ENCODE measurements at regions of chr12 and their contacts with region 1.

Region 1: GRCh38 chr12:10153271-10154144 is 18.4 kb downstream of the OLR1 start:
- DNase-seq: peak; percentile 54 to 81 (median 76)
- H3K4me3 ChIP-seq: peak overlapping the region; percentile 50 to 91 (median 69)
- H3K27ac ChIP-seq: peak overlapping the region; percentile 45 to 98 (median 91)
- H3K27me3 ChIP-seq: no peaks in the 10 kb centered on the region
- CTCF ChIP-seq: peak; percentile 60 to 96 (median 89)

Region 2: DNA sequence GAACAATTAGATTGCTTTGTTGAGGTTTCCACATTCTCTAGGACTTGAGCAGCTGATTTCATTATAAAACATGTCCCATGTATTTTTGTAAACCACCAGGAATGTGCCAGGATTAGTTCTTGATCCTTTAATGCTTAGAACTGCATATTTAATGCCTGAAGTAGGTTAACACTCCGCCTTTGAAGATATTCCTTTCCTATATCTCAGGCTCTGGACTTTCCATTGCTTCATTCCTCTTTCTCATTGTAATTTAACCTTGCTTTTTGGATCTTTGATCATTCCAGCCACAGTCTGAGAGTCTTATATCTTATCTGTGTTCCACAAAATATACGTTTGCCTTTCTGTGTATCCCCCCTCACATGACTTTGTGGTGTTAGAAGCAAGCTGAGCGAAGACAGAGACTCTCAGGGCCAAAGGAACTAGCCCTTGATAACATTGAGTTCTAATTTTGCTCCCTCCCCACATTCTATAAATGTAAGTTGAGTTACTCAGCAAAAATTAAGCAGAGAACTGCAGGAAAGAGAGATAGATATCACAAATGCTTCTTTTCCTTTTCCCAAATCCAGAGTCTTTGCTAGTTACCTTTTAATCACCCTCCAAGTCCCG is 152.2 kb before region 1 on chr12:
- intact Hi-C with region 1: no loop called
- DNase-seq: no peak
- H3K4me3 ChIP-seq: no peak overlapping the region
- H3K27ac ChIP-seq: no peak overlapping the region
- H3K27me3 ChIP-seq: peaks cover 0 to 2% (median 0%) of the 10 kb centered on the region in 45 donors
- CTCF ChIP-seq: no peak

Region 3: DNA sequence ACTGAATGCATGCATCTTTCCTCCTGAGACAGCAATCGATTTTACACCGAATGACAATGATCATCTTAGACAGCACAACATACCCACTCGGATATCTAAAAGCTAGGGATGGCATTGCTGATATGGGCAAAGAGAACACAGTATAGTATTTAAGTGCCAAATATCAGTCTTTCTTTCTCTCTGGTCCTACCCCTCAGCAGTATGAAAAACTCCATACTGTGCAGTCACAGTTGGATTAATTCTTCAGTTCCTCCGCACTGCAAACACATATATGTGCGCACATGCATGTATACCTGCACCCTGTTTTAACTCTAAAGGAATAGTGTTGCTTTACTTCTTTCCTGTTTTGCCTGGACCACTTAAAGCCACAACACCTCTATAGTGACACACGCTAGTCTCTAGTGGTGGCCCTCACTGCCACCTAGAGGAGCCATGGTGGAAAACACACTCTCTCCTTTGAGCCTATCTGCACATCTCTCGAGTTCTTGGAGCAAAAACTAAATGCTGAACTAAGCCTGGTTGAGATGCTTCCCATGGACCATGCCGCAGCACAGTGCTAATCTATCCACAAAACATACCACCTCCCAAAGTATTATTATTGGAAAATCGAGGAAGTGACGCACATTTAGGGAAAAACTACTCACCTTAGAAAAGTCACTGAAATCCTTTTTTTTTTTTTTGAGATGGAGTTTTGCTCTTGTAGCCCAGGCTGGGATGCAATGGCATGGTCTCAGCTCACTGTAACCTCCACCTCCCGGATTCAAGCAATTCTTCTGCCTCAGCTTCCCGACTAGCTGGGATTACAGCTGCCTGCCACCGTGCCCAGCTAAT is 37.3 kb after region 1 on chr12:
- intact Hi-C with region 1: loop called (anchors 1 to 2 kb)
- DNase-seq: peak in 9 of 10 donors; percentile 38 to 81 (median 67)
- H3K4me3 ChIP-seq: no peak overlapping the region
- H3K27ac ChIP-seq: peak overlapping the region in 7 of 59 donors; percentile 1 to 64 (median 9)
- H3K27me3 ChIP-seq: no peaks in the 10 kb centered on the region
- CTCF ChIP-seq: peak; percentile 18 to 86 (median 74)

Region 4: DNA sequence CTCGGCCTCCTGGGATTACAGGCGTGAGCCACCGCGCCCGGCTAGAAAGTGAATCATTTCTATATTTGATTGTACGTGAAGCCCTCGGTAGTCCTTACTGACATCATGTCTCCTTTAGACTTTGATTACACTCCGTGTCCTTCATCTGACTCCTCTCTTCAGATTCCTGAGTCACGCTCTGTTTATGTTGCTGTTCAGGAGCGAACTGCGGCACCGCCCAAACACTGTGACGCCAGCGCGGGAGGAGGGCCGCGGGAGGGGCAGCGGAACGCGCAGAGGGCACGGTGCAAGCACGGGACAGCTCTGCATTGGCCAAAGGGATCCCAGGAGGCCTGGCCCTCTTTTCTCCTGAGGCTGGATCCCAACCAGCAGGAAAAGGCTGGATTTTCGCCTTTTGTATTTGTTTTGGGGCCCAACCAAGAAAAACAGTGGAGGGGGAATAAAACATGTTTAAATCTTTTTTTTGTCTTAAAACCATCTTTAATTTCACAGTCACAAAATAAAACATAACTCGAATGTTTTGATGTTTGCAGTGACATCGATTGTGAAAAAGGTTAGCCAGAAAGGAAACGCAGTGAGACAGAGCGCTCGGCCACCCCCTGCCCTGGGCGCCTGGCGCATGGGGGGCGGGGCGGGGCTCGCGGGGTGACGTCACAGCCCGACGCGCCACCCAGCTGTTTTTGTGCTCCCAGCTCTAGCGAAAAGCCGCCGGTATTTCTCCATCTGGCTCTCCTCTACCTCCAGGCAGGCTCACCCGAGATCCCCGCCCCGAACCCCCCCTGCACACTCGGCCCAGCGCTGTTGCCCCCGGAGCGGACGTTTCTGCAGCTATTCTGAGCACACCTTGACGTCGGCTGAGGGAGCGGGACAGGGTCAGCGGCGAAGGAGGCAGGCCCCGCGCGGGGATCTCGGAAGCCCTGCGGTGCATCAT is 59.0 kb after region 1 on chr12 and contains the start of gene GABARAPL1:
- intact Hi-C with region 1: loop called (anchors 5 kb)
- DNase-seq: peak; percentile 84 to 97 (median 94)
- H3K4me3 ChIP-seq: peak within 1 kb of the TSS; percentile 51 to 98 (median 86)
- H3K27ac ChIP-seq: peak within 1 kb of the TSS; percentile 87 to 100 (median 99)
- H3K27me3 ChIP-seq: no peaks in the 10 kb centered on the region
- CTCF ChIP-seq: peak in 22 of 56 donors; percentile 2 to 48 (median 16)
- total RNA-seq, gene GABARAPL1: 163 to 583 (median 420) TPM

Region 5: GRCh38 chr12:10562306-10562933 is 408.9 kb after region 1 on chr12:
- intact Hi-C with region 1: loop called in 1 of 2 experiments (anchors 5 kb)
- DNase-seq: no peak
- H3K4me3 ChIP-seq: no peak overlapping the region
- H3K27ac ChIP-seq: no peak overlapping the region
- H3K27me3 ChIP-seq: peaks cover 0 to 3% (median 0%) of the 10 kb centered on the region in 45 donors
- CTCF ChIP-seq: peak; percentile 69 to 98 (median 87)

Measured in dorsolateral prefrontal cortex (tissue), 120 donors.